ENCODE measurements at regions of chr18 and their contacts with region 1.

Region 1: DNA sequence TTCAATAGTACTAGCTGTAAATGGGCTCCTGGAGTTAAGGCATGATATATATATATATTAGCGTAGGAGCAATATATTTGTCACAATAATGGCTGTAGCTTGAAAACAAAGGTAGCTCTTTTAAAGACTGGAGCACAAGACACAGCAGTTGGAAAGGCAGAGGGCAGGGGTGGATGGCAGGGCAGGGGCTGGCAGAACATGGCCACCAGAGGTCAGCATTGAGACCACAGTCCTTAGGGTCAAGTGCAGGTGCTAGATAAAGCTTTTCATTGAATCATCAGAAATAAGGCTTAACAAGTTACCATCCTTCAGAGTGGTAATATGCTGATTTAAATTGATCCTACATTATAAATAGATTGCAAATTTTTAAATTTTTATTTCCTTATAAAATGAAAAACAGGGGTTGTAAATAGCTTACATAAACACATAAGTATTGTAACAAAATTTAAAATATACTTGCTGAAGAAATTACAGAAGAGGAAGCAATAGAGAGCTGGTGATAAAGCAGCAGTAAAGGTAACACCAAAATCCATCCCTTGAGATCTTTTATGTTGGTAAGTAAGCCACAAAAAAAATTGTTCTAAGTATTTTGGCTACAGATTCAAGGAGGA is 161.2 kb upstream of the PIEZO2 start:
- DNase-seq: peak; percentile 49
- ATAC-seq: peak; percentile 80
- H3K4me3 ChIP-seq: no peak overlapping the region
- H3K27ac ChIP-seq: no peak overlapping the region
- H3K4me1 ChIP-seq: no peaks in the 10 kb centered on the region
- H3K27me3 ChIP-seq: no peaks in the 10 kb centered on the region
- CTCF ChIP-seq: peak; percentile 67
- POLR2A ChIP-seq: no peak
- RAD21 ChIP-seq: peak; percentile 73

Region 2: DNA sequence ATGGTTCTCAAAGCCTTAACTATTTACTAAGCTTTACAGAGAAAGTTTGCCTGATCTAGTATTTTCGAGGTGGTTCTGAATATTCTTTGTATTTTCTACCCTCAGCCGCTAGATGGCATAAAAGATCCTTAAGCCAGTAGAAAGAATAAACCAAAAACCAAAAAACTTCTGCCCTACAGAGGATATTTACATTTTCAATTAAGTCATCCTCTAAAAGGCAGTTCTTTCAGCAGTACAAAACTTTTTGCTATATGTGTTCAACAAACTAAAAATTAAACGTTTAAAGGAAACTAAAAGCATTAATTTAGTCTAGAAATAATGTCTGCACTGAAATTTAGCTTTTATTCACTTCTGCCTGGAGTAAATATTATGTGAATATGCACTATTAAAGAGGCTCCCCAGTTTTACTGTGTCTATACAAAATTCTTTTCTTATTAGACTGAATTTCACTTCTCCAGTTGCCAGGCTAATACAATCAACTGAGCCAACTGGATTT is 458.7 kb before region 1 on chr18:
- CTCF ChIA-PET with region 1: no interaction called
- POLR2A ChIA-PET with region 1: no interaction called
- dilution Hi-C with region 1: no loop called
- in situ Hi-C with region 1: no loop called
- intact Hi-C with region 1: loop called (anchors 5 kb)
- DNase-seq: peak; percentile 81
- ATAC-seq: peak; percentile 90
- H3K4me3 ChIP-seq: no peak overlapping the region
- H3K27ac ChIP-seq: peak overlapping the region; percentile 50; the same call in 1 of the 2 replicates
- H3K4me1 ChIP-seq: peaks cover 2% of the 10 kb centered on the region; the same call in 1 of the 2 replicates
- H3K27me3 ChIP-seq: no peaks in the 10 kb centered on the region
- CTCF ChIP-seq: peak; percentile 93
- POLR2A ChIP-seq: no peak
- RAD21 ChIP-seq: peak; percentile 93

Region 3: GRCh38 chr18:11293794-11294193 is 16.8 kb before region 1 on chr18:
- CTCF ChIA-PET with region 1: interaction called, 12 read pairs
- POLR2A ChIA-PET with region 1: no interaction called
- dilution Hi-C with region 1: no loop called
- in situ Hi-C with region 1: no loop called
- intact Hi-C with region 1: no loop called
- DNase-seq: no peak
- ATAC-seq: no peak
- H3K4me3 ChIP-seq: no peak overlapping the region
- H3K27ac ChIP-seq: no peak overlapping the region
- H3K4me1 ChIP-seq: no peaks in the 10 kb centered on the region
- H3K27me3 ChIP-seq: peaks cover 6% of the 10 kb centered on the region; the same call in 1 of the 2 replicates
- CTCF ChIP-seq: no peak
- POLR2A ChIP-seq: no peak
- RAD21 ChIP-seq: no peak

Region 4: DNA sequence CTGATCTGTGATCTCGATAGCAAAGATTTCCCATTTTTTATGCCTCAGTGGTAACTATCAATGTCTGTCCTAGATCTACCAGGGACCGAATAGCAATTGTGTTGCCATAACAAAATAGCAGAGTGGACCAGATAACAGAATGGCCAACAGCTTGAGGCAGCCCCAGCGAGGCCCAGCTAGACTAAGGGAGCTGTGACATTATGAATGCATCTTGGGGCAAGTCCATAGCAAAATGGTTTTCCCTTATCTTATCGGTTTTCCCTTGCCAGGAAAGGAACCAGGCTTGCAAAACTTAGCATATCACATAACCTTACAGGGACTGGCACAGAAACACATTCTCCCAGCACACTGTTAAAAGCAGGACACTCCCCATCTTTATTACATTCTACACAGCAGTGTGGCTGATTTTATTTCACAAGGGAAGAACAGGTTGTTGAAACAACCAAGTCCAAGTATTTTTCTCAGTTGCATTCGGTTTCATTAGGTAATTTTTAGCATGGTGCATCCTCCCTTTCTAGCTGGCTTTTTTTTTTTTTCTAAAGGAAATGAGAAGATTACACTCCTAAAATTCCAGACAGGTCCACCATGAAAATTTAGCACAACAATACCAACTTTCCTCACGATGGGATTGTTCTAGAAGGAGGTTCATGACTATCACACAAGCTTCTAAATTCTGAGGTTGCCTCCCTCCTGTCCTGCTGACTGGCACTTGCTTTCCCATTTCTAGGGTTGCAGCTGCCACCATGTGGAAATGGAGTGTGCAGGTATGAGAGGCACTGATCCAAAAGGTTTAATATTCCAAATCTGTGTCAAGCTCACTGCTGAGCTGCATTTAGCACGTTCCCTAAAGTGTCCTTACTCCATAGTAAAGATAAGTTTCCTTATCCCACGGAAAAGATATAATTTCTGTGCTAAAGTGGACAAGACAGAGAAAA is 201.8 kb after region 1 on chr18:
- CTCF ChIA-PET with region 1: interaction called, 18 read pairs
- POLR2A ChIA-PET with region 1: no interaction called
- dilution Hi-C with region 1: no loop called
- in situ Hi-C with region 1: no loop called
- intact Hi-C with region 1: no loop called
- DNase-seq: no peak
- ATAC-seq: no peak; the same call in 1 of the 2 replicates
- H3K4me3 ChIP-seq: no peak overlapping the region
- H3K27ac ChIP-seq: no peak overlapping the region
- H3K4me1 ChIP-seq: no peaks in the 10 kb centered on the region
- H3K27me3 ChIP-seq: peaks cover 2% of the 10 kb centered on the region; the same call in 1 of the 2 replicates
- CTCF ChIP-seq: peak; percentile 22; the same call in 1 of the 2 replicates
- POLR2A ChIP-seq: no peak
- RAD21 ChIP-seq: peak; percentile 45

Region 5: GRCh38 chr18:11518788-11519685 is 208.5 kb after region 1 on chr18:
- CTCF ChIA-PET with region 1: interaction called, 18 read pairs
- POLR2A ChIA-PET with region 1: no interaction called
- dilution Hi-C with region 1: no loop called
- in situ Hi-C with region 1: no loop called
- intact Hi-C with region 1: loop called (anchors 1 kb)
- DNase-seq: peak; percentile 55
- ATAC-seq: peak; percentile 86
- H3K4me3 ChIP-seq: no peak overlapping the region
- H3K27ac ChIP-seq: no peak overlapping the region
- H3K4me1 ChIP-seq: no peaks in the 10 kb centered on the region
- H3K27me3 ChIP-seq: peaks cover 2% of the 10 kb centered on the region; the same call in 1 of the 2 replicates
- CTCF ChIP-seq: peak; percentile 71
- POLR2A ChIP-seq: no peak
- RAD21 ChIP-seq: peak; percentile 70

Region 6: GRCh38 chr18:11553098-11553940 is 242.7 kb after region 1 on chr18:
- CTCF ChIA-PET with region 1: interaction called, 8 read pairs
- POLR2A ChIA-PET with region 1: no interaction called
- dilution Hi-C with region 1: no loop called
- in situ Hi-C with region 1: no loop called
- intact Hi-C with region 1: loop called (anchors 1 kb)
- DNase-seq: peak; percentile 59
- ATAC-seq: peak; percentile 99
- H3K4me3 ChIP-seq: no peak overlapping the region
- H3K27ac ChIP-seq: no peak overlapping the region
- H3K4me1 ChIP-seq: no peaks in the 10 kb centered on the region
- H3K27me3 ChIP-seq: peaks cover 9% of the 10 kb centered on the region
- CTCF ChIP-seq: peak; percentile 86
- POLR2A ChIP-seq: no peak
- RAD21 ChIP-seq: peak; percentile 89

Measured in IMR-90 (cell line).